Cardiac septum (tissue), 1 donor: ENCODE measurements at regions of chr12 and their contacts with region 1.

Region 1: DNA sequence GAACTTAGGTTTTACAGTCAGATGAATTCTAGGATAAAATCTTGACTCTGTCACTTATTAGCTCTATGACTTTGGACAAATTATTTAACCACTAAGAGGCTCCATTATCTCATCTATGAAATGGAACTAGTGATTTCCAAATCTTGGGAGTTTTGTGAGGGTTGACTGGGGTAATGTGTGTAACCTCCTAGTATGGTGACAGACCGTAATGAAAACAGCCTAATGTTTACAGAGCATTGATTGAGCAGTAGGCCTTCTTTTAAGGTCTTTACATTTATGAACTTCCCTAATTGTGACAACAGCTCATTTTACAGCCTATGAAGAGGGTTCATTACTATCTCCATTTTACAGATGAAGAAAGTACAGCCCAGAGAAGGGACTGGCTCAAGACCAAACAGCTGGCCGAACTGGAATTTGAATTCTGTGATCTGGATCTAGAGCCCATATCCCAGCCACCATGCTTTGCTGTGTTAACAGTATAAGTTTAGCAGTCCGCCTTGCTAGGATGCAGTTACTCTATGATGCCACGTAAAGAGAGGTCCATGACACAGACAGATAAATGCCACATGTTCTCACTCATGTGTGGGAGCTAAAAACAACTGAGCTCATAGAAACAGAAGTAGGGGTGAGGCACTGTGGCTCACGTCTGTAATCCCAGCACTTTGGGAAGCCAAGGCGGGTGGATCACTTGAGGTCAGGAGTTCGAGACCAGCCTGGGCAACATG is 9.1 kb upstream of the FBXL14 start:
- DNase-seq: no peak

Region 2: GRCh38 chr12:1117970-1118563 is 485.4 kb before region 1 on chr12:
- intact Hi-C with region 1: loop called (anchors 5 kb)
- DNase-seq: peak; percentile 77

Region 3: GRCh38 chr12:1740161-1740948 is 136.9 kb after region 1 on chr12:
- intact Hi-C with region 1: no loop called
- DNase-seq: no peak

Region 4: DNA sequence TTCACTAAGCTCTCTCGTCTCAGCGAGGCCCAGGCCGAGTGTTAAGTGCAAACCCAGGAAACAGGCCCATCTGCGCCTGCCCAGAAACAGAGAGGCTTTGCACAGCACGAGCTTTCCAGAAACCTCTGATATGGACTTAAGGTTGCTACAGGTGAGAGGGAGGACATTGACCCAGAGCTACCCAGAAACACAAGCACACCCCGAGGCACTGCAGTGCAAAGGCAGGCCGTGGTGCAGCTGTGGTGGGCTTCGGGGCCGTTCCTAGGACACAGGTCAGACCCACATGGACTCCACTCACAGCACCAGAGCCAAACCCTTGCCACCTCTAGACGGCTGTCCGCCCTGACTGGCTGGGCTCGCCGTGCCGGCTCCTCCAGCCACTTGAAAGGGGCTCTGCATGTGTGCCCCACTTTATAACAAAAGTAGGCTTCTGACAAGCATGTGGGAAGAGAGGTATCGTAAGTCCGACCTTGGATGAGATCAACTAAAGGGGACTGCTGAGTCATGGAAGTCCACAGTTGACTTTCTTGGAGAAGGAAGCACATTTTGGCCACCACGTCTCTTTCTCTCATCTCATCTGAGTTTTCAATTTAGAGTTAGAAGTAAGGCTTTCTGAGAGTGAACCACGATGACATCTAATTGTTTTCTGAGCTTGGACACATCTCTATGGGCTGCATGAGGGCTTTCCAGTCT is 276.9 kb after region 1 on chr12:
- intact Hi-C with region 1: no loop called
- DNase-seq: no peak